ENCODE measurements at regions of chr6 and their contacts with region 1.

Region 1: DNA sequence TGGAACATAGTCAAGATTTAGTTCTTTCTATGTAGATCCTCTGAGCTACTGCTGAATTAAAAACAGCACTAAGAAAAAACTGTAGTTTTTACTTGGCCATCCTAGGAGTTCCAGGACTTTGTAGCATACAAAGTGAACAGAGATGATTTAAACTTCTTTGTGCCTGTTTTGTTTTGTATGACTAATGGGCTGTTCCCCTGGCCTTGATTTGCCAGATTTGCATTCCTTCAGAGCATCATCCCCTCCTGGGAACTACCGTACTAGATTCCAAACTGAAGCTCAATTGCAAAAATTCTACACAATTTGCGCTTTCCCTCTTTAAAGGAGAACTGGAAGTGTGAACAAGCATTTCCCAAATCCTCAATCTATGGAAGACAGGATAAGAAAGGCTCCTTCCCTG is 23.1 kb downstream of the ACOT13 start:
- ATAC-seq: no peak
- H3K4me3 ChIP-seq: no peak overlapping the region
- H3K27ac ChIP-seq: no peak overlapping the region
- H3K4me1 ChIP-seq: peaks cover 0 to 5% of the 10 kb centered on the region in 2 donors

Region 2: DNA sequence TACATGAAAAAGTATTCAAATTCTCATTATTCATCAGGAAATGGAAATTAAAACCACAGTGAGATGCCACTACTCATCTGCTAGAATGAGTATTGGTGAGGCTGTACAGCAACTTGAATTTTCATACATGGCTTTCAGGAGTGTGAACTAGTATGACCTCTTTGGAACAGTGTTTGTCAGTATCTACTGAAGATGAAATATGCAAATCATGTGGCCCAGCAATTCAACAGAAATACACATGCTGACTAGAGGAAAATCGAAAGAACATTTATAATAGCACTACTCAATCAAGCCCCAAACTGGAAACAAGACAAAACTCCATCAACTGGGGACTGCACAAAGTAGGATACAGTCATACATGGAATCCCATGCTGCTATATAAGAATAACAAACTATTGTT is 434.3 kb before region 1 on chr6:
- in situ Hi-C with region 1: no loop called
- ATAC-seq: peak in 3 of 8 experiments; percentile 18 to 72 (median 67)
- H3K4me3 ChIP-seq: no peak overlapping the region
- H3K27ac ChIP-seq: no peak overlapping the region
- H3K4me1 ChIP-seq: peaks cover 0 to 11% of the 10 kb centered on the region in 2 donors

Region 3: GRCh38 chr6:24431045-24431451 is 258.9 kb before region 1 on chr6:
- in situ Hi-C with region 1: loop called in 1 of 9 experiments (anchors 25 kb)
- ATAC-seq: peak in 4 of 8 experiments; percentile 24 to 63 (median 48)
- H3K4me3 ChIP-seq: no peak overlapping the region
- H3K27ac ChIP-seq: no peak overlapping the region
- H3K4me1 ChIP-seq: no peaks in the 10 kb centered on the region

Region 4: DNA sequence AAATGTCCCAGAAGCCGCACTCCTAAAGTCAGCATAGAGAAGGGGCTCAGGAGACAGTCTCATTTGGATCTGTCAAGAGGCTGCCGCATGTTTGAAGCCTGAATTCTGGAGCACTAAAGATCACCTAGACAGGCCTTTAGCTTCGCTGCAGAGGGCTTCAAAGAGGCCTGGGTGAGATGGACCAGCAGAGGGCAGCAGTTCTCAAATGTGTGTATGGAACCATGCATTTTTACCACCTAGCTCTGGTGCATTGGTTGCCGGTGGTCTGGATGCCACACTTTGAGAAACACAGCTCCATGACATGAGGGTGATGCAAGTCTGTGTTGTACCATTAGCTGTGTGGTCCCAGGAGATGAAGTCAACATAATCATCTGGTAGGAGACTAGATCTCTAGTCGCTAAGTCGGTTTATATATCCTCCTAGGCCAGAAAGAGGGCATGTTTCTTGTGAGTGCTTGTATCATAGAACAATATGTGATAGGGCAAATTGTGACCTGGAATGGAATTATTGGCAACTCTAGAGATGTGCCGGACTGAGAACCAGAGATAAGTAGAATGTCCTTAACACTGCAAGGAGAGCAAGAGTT is 108.8 kb before region 1 on chr6:
- in situ Hi-C with region 1: loop called in 5 of 9 experiments (anchors 10 to 25 kb)
- ATAC-seq: peak; percentile 35 to 94 (median 66)
- H3K4me3 ChIP-seq: no peak overlapping the region
- H3K27ac ChIP-seq: no peak overlapping the region
- H3K4me1 ChIP-seq: peaks cover 11 to 24% of the 10 kb centered on the region in 2 donors

Measured in motor neuron (in vitro differentiated cells).